ENCODE measurements at regions of chr11 and their contacts with region 1.

Region 1: DNA sequence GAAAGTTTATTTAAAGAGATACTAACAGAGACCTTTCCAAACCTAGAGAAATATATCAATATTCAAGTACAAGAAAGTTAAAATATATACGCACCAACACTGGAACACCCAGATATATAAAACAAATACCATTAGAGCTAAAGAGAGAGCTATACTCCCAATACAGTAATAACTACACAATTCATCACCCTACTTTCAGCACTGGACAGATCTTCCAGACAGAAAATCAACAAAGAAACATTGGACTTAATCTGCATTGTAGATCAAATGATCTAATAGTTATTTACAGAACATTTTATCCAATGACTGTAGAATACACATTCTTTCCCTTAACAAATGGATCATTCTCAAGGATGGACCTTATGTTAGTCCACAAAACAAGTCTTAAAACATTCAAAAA is 311.9 kb downstream of the METTL15 start:
- DNase-seq: no peak
- H3K4me3 ChIP-seq: no peak overlapping the region
- H3K27ac ChIP-seq: no peak overlapping the region
- H3K4me1 ChIP-seq: no peaks in the 10 kb centered on the region
- H3K27me3 ChIP-seq: no peaks in the 10 kb centered on the region
- CTCF ChIP-seq: no peak

Region 2: DNA sequence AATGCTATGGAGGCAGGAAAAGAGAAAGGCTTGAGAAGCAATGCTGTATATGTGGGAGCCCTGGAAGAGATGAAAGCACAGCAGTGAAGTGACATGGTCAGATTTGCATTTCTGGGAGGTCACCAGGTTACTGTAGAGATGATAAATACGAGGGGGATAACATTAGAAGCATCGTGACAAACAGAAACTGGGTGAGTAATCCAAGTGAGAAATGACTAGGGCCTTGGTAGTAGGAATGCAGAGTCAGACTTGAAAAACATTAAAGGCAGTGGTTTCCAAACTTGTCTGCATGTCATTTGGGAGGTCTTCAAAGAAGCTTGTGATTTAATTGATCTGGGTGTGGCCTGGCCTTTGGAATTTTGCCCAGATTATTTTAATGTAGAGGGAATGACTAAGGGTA is 1101.0 kb before region 1 on chr11:
- intact Hi-C with region 1: no loop called
- DNase-seq: no peak
- H3K4me3 ChIP-seq: no peak overlapping the region
- H3K27ac ChIP-seq: no peak overlapping the region
- H3K4me1 ChIP-seq: no peaks in the 10 kb centered on the region
- H3K27me3 ChIP-seq: no peaks in the 10 kb centered on the region
- CTCF ChIP-seq: no peak

Region 3: GRCh38 chr11:28017816-28018215 is 402.3 kb before region 1 on chr11:
- intact Hi-C with region 1: loop called (anchors 5 kb)
- DNase-seq: no peak
- H3K4me3 ChIP-seq: no peak overlapping the region
- H3K27ac ChIP-seq: no peak overlapping the region
- H3K4me1 ChIP-seq: no peaks in the 10 kb centered on the region
- H3K27me3 ChIP-seq: no peaks in the 10 kb centered on the region
- CTCF ChIP-seq: no peak

Region 4: DNA sequence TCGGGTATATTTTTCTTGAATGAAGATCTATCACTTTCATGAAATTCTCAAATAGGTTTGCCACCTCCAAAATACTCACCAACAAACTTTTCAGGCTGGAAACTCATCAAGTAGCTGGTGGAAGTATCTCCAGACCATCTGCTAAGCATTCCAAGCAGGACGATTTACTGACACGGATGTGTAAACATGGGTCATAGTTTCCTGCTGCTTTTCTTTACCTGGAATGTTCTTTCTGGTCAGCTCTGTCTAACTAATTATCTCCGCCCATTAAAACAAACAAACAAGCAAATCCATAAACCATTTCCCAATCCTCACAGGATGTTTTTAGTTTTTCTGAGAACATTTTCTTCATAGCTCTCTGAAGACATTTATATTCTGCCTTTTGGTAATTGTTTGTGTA is 85.1 kb after region 1 on chr11:
- intact Hi-C with region 1: no loop called
- DNase-seq: no peak
- H3K4me3 ChIP-seq: no peak overlapping the region
- H3K27ac ChIP-seq: no peak overlapping the region
- H3K4me1 ChIP-seq: no peaks in the 10 kb centered on the region
- H3K27me3 ChIP-seq: no peaks in the 10 kb centered on the region
- CTCF ChIP-seq: no peak